A673 (cell line): ENCODE measurements at regions of chr1 and their contacts with region 1.

Region 1: DNA sequence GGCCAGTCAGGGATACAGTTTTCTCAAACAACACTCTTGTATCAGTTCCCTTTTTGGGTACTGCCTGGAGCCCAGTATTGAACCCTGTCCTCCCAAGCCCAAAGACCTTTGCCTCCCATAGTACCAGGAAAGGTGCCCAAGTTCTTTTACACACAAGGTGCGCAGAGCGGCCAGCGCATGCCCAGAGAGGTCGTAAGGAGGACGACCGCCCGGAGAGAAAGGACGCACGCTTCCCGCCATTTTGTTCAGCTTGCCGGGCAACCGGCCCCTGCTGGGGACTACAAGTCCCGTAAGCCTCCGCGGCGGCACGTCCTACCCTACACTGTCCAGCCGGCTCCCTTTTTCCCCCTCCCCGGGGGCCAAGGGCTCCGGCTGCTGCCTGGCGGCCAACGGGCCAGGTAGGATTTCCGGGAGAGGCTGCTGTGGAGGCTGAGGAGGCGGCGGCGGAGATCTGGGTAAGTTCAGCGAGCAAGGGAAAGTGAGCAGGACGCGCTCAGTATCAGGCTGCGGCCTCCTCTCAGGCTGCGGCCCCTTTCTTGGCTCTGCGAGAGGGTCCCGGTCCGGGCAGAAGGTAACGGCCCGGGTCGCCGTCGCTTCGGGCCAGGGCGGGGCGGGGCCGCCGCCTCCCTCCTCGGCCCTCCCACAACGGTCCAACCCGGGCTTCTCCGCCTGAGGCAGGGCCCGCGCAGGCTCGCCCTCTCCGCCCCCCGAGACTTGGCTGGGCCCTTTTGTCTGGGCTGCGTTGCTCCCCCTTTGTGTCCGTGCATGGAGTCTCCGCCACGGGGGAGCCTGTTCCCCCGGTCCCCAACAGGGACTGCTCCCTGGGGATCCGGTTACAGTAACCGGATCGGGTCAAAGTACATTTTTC is at the start of gene PHACTR4:
- DNase-seq: peak; percentile 93
- H3K4me3 ChIP-seq: peak within 1 kb of the TSS; percentile 69
- H3K27ac ChIP-seq: peak within 1 kb of the TSS; percentile 95
- H3K4me1 ChIP-seq: peaks cover 4% of the 10 kb centered on the region
- H3K27me3 ChIP-seq: no peaks in the 10 kb centered on the region
- CTCF ChIP-seq: no peak
- total RNA-seq, gene PHACTR4: 63.4 and 66.2 TPM in 2 replicates

Region 2: DNA sequence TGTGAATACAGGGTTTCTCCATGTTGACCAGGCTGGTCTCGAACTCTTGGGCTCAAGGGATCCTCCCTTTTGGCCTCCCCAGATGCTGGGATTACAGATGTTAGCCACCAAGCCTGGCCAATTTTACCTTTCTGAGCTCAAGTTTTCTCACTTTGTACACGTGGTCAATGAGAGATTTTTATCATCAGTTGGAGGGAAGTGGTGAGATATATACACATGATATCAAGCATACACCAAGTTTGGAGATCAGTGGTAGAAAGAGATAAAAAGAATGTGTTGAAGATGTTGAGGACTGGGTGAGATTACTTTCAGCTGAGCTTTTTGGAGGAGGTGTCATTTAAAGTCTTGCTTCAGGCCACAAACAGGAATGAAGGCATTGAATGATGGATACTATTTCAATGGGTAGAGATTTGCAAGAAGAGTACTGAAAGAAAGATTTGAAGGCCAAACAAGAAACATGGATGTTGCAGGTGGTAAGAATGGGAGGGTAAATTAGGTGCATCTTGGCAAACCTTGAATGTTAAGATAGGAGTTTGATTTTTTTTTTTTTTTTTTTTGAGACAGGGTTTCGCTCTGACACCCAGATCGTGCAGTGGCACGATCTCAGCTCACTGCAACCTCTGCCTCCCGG is 113.3 kb before region 1 on chr1:
- CTCF ChIA-PET with region 1: no interaction called
- POLR2A ChIA-PET with region 1: no interaction called
- intact Hi-C with region 1: no loop called
- DNase-seq: no peak
- H3K4me3 ChIP-seq: no peak overlapping the region
- H3K27ac ChIP-seq: no peak overlapping the region
- H3K4me1 ChIP-seq: peaks cover 14% of the 10 kb centered on the region
- H3K27me3 ChIP-seq: no peaks in the 10 kb centered on the region
- CTCF ChIP-seq: no peak

Region 3: DNA sequence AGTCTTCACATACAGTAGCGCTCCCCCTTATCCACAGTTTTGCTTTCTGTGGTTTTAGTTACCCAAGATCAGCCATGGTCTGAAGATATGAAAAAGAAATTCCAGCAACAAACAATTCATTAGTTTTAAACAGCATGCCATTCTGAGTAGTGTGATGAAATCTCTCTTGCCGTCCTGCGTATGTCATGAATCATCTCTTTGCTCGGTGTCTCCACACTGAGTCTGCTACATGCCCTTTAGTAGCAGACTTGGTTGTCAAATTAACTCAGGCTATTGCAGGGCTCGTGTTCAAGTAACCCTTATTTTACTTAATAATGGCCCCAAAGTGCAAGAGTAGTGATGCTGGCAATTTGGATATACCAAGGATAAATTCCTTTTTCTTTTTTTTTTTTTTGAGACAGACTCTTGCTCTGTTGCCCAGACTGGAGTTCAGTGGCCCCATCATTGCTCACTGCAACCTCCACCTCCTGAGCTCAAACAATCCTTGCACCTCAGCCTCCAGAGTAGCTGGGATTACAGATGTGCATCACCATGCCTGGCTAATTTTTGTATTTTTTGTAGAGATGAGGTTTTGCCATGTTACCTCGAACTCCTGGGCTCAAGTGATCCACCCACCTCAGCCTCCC is 22.5 kb after region 1 on chr1:
- CTCF ChIA-PET with region 1: no interaction called
- POLR2A ChIA-PET with region 1: interaction called, 16 read pairs
- intact Hi-C with region 1: no loop called
- DNase-seq: peak; percentile 34
- H3K4me3 ChIP-seq: no peak overlapping the region
- H3K27ac ChIP-seq: no peak overlapping the region
- H3K4me1 ChIP-seq: no peaks in the 10 kb centered on the region
- H3K27me3 ChIP-seq: no peaks in the 10 kb centered on the region
- CTCF ChIP-seq: no peak